ENCODE measurements at regions of chr3 and their contacts with region 1.

Region 1: GRCh38 chr3:66822186-66823008 is 175.7 kb upstream of the KBTBD8 start:
- DNase-seq: peak; percentile 67

Region 2: GRCh38 chr3:66253790-66254620 is 568.4 kb before region 1 on chr3:
- in situ Hi-C with region 1: loop called (anchors 25 kb)
- DNase-seq: peak; percentile 54

Region 3: DNA sequence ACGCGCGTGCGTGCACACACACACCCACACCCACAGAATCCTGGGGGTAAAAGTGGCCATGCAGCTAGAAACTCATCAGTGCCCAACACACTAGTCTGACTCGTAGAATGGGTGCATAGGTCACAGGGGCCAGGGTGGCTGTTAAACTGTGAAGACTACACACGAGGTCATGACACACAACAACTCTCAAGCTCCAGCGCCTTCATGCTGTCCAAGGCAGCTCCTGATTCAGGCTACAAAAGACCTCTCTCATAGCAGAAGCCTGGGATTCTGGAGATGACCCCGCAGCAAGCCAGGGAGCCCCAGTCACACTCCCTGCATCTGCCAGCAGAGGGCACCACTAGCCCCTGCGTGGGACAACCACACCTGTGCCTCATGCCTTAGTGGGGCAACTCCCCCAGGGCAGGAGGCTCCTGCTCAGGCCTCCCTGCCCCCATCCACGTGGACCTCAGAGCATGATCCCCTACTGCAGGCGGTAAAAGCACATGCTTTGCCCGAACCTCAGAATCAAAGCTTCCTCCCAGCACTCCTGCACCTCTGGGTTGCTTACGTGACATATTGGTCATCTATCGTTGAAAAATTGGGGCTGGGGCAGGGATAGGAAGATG is 414.7 kb before region 1 on chr3:
- in situ Hi-C with region 1: loop called (anchors 10 kb)
- DNase-seq: peak; percentile 72

Region 4: GRCh38 chr3:66554178-66554577 is 268.2 kb before region 1 on chr3:
- in situ Hi-C with region 1: no loop called
- DNase-seq: no peak

Region 5: GRCh38 chr3:67083277-67083676 is 260.9 kb after region 1 on chr3:
- in situ Hi-C with region 1: no loop called
- DNase-seq: peak; percentile 52